ENCODE measurements at regions of chr2 and their contacts with region 1.

Region 1: DNA sequence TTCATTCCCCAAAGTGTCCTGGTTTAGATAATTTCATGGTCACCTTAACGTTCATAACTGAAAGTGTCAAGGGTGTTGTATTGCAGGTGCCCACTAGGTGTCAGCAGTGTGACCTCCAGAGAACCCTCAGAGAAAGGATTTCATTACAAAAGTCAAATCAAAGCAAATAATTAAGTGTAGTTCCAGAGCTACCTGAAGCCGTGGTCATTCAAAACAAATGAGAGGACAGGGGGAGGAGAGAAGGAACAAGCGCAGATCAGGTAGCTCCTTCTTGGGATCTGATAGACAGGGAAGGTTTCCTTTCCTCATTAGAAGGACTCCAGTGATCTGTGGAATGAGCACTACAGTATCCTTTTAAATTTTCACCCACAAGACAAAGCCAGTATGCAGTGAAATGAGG is at the start of gene SLC9A4:
- DNase-seq: no peak
- ATAC-seq: no peak
- total RNA-seq, gene SLC9A4: not detected

Region 2: DNA sequence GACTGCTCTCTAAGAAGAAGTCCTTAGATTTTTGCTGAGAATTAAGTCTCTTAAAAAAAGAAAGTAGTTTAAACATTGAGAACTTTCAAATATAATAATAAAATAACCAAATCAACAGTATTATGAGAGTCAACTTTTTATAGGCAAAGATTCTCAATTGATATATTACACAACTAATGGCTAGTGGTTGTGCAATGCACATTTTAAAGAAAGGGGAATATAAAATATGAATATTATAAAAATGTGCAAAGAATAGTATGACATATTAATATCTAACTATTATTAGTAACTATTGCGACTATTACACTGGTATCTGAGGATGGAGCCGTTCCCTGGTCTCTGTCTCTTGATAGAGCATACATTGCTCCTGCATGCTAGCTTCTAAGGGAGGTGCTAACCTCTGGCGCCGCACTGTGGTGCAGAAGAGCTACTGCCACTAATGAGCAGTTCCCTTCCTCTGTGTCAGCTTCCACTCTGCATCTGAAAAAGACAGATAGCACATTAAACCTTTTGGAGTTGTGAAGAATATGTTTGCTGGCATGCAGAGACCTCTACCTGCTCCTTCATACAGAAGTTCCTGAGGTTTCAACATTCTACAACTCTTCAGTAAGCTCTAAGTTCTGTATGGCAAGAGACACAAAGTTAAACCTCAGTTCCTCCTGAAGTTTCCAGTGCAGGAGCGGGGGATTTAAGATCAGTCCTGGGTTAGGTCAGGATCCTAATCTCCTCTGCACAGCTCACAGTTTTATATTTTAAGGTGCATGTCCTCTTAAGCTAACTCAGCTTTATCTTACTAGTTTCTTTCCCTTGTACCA is 142.8 kb after region 1 on chr2:
- intact Hi-C with region 1: loop called (anchors 2 kb)
- DNase-seq: peak; percentile 86
- ATAC-seq: no peak

Region 3: GRCh38 chr2:102703748-102704147 is 230.7 kb after region 1 on chr2:
- intact Hi-C with region 1: loop called (anchors 2 kb)
- DNase-seq: no peak
- ATAC-seq: peak; percentile 48

Region 4: GRCh38 chr2:102872388-102872787 is 399.4 kb after region 1 on chr2:
- intact Hi-C with region 1: loop called (anchors 10 kb)
- DNase-seq: no peak
- ATAC-seq: no peak